ENCODE measurements at regions of chr1 and their contacts with region 1.

Region 1: GRCh38 chr1:72296481-72296880 is 14.1 kb upstream of the NEGR1 start:
- DNase-seq: no peak
- ATAC-seq: no peak
- H3K4me3 ChIP-seq: no peak overlapping the region
- H3K4me3 Mint-ChIP-seq: no peak overlapping the region
- H3K27ac ChIP-seq: no peak overlapping the region
- H3K27ac Mint-ChIP-seq: no peak overlapping the region
- H3K4me1 ChIP-seq: no peaks in the 10 kb centered on the region
- H3K4me1 Mint-ChIP-seq: no peaks in the 10 kb centered on the region
- H3K27me3 ChIP-seq: no peaks in the 10 kb centered on the region
- H3K27me3 Mint-ChIP-seq: no peaks in the 10 kb centered on the region
- CTCF ChIP-seq: no peak

Region 2: DNA sequence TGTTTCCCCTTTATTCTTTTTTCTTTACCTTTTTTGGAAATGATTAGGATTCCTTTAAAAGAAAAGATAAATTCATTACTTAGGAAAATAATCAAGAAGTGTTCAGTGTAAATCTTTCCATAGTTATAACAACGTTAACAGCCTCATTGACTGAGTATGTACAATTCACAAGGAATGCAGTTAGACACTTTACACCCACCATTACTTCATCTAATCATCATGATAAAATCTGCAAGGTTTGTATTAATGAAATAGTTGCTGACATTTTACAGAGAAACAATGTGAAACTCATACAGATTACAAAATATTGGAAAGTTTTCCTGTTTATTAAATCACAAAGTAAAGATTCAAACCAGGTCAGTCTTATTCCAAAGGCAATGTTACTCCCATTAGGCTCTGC is 45.2 kb after region 1 on chr1:
- CTCF ChIA-PET with region 1: no interaction called
- POLR2A ChIA-PET with region 1: no interaction called
- intact Hi-C with region 1: loop called (anchors 1 kb)
- DNase-seq: no peak
- ATAC-seq: no peak
- H3K4me3 ChIP-seq: no peak overlapping the region
- H3K4me3 Mint-ChIP-seq: no peak overlapping the region
- H3K27ac ChIP-seq: no peak overlapping the region
- H3K27ac Mint-ChIP-seq: no peak overlapping the region
- H3K4me1 ChIP-seq: no peaks in the 10 kb centered on the region
- H3K4me1 Mint-ChIP-seq: no peaks in the 10 kb centered on the region
- H3K27me3 ChIP-seq: no peaks in the 10 kb centered on the region
- H3K27me3 Mint-ChIP-seq: no peaks in the 10 kb centered on the region
- CTCF ChIP-seq: no peak